ENCODE measurements at regions of chr11 and their contacts with region 1.

Region 1: DNA sequence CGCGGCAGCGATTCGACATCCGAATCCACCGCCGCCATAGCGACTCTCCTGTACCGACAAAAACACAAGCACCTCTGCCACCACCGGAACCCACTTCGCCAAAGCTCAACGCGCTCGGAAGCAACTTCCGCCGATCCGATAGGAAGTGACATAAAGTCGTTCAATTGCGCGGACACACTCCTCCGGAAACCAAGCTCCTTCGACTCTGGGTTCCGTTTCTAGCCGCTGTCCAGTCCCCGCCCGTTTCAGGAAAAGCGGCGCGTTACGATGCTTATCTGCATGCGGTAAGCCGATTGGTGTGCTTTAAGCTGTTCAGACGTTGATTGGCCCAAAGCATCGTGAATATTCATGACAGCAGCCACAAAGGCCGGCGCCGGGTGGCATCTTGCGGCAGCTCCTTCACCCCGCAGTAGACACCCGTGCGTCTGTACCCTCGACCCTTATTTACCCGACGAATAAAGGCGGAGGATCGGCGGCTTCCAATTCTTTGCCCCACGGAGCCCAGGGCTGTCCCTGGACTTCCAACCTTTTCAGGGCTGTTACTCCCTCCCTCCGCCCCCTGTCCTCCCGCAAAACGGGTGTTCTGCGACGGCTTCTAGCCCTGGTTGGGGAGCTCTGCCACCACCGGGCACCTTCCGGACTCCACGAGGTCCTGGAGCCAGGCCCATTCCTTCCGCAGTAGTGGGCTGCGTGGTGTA is at the start of gene TUT1:
- DNase-seq: peak; percentile 98
- H3K4me3 Mint-ChIP-seq: peak within 1 kb of the TSS; percentile 99
- H3K27ac Mint-ChIP-seq: peak within 1 kb of the TSS; percentile 96
- H3K4me1 Mint-ChIP-seq: peaks cover 65% of the 10 kb centered on the region
- H3K27me3 Mint-ChIP-seq: no peaks in the 10 kb centered on the region
- total RNA-seq, gene TUT1: 23.7 to 25.2 TPM

Region 2: DNA sequence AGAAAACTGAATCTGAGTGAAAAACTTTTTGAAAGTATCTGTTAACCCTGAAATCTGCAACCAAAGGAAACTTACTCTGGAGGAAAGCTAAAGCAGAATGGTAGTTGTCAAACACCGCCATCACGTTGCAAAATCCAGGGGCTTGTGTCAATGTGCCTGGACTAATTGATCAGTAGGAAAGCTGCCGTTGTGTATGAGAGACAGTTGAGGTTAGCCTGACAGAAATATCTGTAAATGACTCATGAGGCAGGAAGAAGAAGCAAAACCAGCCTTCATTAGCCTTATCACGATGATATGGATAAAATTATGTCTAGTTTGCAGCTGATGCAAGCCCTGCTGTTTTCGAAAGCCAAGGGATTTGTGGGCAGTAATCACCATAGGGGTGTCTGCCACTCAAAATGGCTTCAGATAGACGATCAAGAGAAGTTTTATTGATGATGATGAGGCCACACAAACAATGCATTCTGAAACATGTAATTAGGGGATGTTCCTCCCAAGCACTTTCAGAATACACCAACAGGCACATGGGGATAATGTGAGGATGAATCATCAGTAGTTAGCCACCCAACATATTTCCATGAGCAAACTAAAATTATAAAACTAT is 163.9 kb before region 1 on chr11:
- CTCF ChIA-PET with region 1: interaction called, 37 read pairs
- POLR2A ChIA-PET with region 1: interaction called, 17 read pairs
- DNase-seq: peak; percentile 48
- H3K4me3 Mint-ChIP-seq: peak overlapping the region; percentile 41
- H3K27ac Mint-ChIP-seq: peak overlapping the region; percentile 91
- H3K4me1 Mint-ChIP-seq: peaks cover 68% of the 10 kb centered on the region
- H3K27me3 Mint-ChIP-seq: peaks cover 1% of the 10 kb centered on the region

Region 3: DNA sequence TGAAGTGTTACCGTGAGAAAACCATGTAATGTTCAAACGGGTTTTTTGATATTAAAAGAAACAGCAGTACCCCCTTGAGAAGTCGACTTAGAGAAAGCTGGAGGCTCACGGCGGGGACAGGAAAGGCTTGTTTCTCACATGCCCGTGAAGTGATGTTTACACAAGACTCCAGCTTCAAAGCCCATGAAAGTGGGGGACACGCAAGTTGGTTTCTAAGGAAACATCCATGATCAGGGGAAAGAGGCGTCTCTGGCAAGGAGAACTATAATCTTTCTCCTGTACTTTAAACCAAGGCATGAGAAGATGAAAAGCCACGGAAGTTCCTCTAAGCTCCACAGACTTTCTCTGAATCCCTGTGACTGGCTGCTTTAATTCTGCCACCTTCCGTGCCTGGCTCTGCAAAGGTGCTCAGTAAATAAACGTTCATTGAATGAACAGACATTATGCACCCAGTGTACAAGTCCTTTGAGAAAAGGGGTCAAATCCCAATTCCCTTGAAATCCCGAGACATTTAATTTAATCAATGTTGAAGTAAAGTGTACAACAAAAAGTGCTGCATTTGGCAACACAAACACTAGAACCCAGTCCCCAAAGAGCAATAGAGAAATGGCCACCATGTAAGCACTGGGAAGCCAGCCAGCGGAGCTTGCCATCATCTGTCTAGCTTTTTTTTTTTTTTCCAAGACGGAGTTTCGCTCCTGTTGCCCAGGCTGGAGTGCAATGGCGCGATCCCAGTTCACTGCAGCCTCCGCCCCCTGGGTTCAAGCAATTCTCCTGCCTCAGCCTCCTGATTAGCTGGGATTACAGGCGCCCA is 103.7 kb before region 1 on chr11:
- CTCF ChIA-PET with region 1: no interaction called
- POLR2A ChIA-PET with region 1: no interaction called
- DNase-seq: no peak
- H3K4me3 Mint-ChIP-seq: no peak overlapping the region
- H3K27ac Mint-ChIP-seq: no peak overlapping the region
- H3K4me1 Mint-ChIP-seq: no peaks in the 10 kb centered on the region
- H3K27me3 Mint-ChIP-seq: peaks cover 2% of the 10 kb centered on the region

Region 4: GRCh38 chr11:62573592-62574362 is 17.8 kb before region 1 on chr11 and contains the start of gene EEF1G:
- CTCF ChIA-PET with region 1: interaction called, 20 read pairs
- POLR2A ChIA-PET with region 1: interaction called, 129 read pairs
- DNase-seq: peak; percentile 99
- H3K4me3 Mint-ChIP-seq: peak within 1 kb of the TSS; percentile 94
- H3K27ac Mint-ChIP-seq: peak within 1 kb of the TSS; percentile 91
- H3K4me1 Mint-ChIP-seq: peaks cover 58% of the 10 kb centered on the region
- H3K27me3 Mint-ChIP-seq: no peaks in the 10 kb centered on the region
- total RNA-seq, gene EEF1G: 991 to 999 TPM

Region 5: DNA sequence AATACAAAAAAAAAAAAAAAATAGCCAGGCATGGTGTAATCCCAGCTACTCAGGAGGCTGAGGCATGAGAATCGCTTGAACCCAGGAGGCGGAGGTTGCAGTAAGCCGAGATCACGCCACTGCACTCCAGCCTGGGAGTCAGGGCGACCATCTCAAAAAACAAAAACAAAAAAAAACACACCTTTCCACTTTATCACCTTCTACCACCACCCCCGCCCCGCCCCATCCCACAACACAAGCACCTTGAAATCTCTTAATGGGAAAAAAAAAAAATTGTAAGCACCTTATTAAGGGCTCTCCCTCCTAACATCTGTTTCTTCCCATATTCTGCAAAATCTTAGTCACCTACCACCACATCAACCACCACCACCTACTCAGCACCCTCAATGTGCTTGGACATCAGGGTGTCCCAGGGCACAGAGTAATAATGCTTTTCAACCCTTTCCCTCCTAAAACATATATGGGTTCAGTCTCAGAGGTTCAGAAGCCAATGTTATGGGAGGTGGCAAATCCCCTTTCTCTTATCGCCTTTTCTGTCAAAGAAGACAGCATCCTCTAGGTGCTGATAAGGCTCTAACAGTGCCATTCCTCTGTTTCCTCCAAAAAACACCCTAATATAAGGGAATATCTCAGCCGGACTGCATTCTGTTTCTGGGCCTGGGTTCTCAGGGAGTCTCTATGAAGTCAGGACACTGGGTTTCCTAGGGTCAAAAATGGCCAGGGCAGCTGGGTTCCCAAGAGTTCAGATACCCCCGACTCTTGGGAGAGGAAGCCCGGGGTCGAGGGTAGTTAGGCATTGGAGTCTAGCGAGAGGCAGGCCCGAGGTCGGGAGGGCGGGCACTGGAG is 60.8 kb after region 1 on chr11:
- CTCF ChIA-PET with region 1: interaction called, 10 read pairs
- POLR2A ChIA-PET with region 1: interaction called, 22 read pairs
- DNase-seq: peak; percentile 47
- H3K4me3 Mint-ChIP-seq: peak overlapping the region; percentile 91
- H3K27ac Mint-ChIP-seq: peak overlapping the region; percentile 85
- H3K4me1 Mint-ChIP-seq: peaks cover 34% of the 10 kb centered on the region
- H3K27me3 Mint-ChIP-seq: no peaks in the 10 kb centered on the region

Region 6: GRCh38 chr11:62694455-62695167 is 103.0 kb after region 1 on chr11:
- CTCF ChIA-PET with region 1: interaction called, 17 read pairs
- POLR2A ChIA-PET with region 1: interaction called, 15 read pairs
- DNase-seq: peak; percentile 79
- H3K4me3 Mint-ChIP-seq: no peak overlapping the region
- H3K27ac Mint-ChIP-seq: no peak overlapping the region
- H3K4me1 Mint-ChIP-seq: peaks cover 7% of the 10 kb centered on the region
- H3K27me3 Mint-ChIP-seq: no peaks in the 10 kb centered on the region

Region 7: DNA sequence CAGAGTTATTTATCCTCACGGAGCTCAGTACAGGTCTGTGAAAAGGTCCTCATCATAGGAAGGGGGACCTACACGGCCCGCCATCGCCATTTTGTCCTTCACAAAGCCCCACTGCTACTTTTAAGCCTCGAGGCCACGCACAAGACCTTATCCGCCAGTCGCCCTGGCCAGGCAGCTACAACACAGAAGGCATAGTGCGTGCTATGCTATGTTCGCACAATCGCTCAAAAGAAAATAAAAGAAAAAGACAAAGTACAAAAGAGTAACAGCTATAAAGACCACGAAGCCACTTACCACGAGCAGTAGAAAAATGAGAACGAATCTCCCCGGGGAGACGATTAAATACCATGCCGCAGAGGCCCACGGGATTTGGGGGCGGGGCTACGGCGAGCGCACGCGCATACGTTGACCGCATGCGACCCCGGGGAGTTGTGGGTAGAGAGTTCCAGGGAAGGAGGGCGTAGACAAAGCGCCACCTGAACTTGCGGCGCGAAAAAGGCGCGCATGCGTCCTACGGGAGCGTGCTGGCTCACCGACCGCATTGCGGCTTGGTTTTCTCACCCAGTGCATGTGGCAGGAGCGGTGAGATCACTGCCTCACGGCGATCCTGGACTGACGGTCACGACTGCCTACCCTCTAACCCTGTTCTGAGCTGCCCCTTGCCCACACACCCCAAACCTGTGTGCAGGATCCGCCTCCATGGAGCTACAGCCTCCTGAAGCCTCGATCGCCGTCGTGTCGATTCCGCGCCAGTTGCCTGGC is 264.2 kb after region 1 on chr11:
- CTCF ChIA-PET with region 1: interaction called, 6 read pairs
- POLR2A ChIA-PET with region 1: interaction called, 23 read pairs
- DNase-seq: peak; percentile 99
- H3K4me3 Mint-ChIP-seq: peak overlapping the region; percentile 97
- H3K27ac Mint-ChIP-seq: peak overlapping the region; percentile 96
- H3K4me1 Mint-ChIP-seq: peaks cover 75% of the 10 kb centered on the region
- H3K27me3 Mint-ChIP-seq: no peaks in the 10 kb centered on the region

Measured in activated CD4-positive, alpha-beta memory T cell treated with anti-CD3 and anti-CD28 coated beads, Interleukin-2, amount 10 ng/mL, durations not matched to agents 7 days and 5 days (primary cell).